Activated CD8-positive, alpha-beta T cell treated with anti-CD3 and anti-CD28 coated beads for 36 hours (primary cell): ENCODE measurements at regions of chr13 and their contacts with region 1.

Region 1: DNA sequence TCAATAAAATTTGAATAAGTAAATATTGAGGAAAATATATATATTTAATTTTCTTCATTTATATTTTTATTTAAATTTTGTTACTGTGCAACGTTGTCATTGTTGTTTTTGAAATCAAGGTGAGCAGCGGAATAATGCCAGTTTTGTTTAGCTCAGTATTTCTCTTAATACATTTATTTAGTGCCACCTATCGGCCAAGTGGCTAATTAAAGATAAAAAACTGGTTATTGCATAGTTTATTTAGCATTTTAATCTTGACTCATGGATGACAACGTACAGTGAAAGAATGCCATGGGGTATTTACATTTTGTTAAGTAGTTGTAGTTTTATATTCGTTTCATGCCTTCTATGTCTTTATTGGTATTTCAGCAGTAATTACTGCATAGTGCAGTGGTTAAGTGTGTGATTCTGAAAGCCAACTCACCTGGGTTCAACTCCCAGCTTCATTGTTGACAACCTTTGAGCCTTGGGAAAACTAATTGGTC is 265.9 kb downstream of the MYO16 start:
- DNase-seq: no peak
- ATAC-seq: no peak
- H3K4me3 Mint-ChIP-seq: no peak overlapping the region
- H3K27ac Mint-ChIP-seq: no peak overlapping the region
- H3K4me1 Mint-ChIP-seq: peaks cover 6% of the 10 kb centered on the region
- H3K27me3 Mint-ChIP-seq: peaks cover 3% of the 10 kb centered on the region
- CTCF ChIP-seq: peak; percentile 68

Region 2: DNA sequence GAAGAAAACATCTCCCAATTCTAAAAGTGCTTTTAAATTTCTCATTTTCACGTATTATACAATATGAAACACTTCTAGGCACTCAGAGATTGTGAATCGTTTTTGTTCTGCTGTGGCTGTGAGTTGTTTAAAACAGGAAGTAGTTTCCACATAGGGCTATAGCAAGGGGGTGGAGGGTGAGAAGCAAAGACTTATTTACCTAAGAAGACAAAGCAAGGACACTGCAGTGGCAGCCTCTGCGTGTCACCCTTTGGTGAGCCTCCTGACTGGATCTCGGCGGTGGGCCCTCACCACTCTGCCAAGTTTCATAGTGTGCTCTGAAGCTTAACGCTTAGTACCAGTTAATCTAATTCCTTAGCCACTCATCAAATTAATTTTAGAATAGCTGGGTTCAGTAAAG is 569.0 kb before region 1 on chr13:
- CTCF ChIA-PET with region 1: interaction called, 7 read pairs
- POLR2A ChIA-PET with region 1: no interaction called
- intact Hi-C with region 1: loop called (anchors 5 kb)
- DNase-seq: no peak
- ATAC-seq: peak; percentile 30
- H3K4me3 Mint-ChIP-seq: no peak overlapping the region
- H3K27ac Mint-ChIP-seq: no peak overlapping the region
- H3K4me1 Mint-ChIP-seq: peaks cover 2% of the 10 kb centered on the region
- H3K27me3 Mint-ChIP-seq: peaks cover 17% of the 10 kb centered on the region
- CTCF ChIP-seq: no peak

Region 3: GRCh38 chr13:108682714-108683113 is 212.5 kb before region 1 on chr13:
- CTCF ChIA-PET with region 1: no interaction called
- POLR2A ChIA-PET with region 1: no interaction called
- intact Hi-C with region 1: no loop called
- DNase-seq: no peak
- ATAC-seq: no peak
- H3K4me3 Mint-ChIP-seq: no peak overlapping the region
- H3K27ac Mint-ChIP-seq: no peak overlapping the region
- H3K4me1 Mint-ChIP-seq: no peaks in the 10 kb centered on the region
- H3K27me3 Mint-ChIP-seq: peaks cover 1% of the 10 kb centered on the region
- CTCF ChIP-seq: no peak

Region 4: DNA sequence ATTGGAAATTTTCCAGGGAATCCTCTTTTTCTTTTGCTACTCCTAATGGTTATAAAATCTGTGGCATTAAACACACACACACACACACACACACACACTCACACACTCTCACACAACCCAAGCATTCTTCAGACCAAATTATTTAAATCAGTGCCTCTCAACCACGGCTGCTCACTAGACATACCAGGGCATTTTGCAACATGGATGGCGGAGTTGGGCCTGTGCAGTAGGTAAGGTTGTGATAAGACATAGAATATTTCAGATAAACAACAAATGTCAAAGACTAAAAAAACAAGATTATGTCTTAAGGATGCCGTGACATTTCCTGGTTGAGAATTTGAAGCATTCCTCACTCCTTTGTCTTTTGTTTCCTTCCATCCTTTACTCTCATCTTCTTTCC is 177.2 kb after region 1 on chr13:
- CTCF ChIA-PET with region 1: no interaction called
- POLR2A ChIA-PET with region 1: no interaction called
- intact Hi-C with region 1: no loop called
- DNase-seq: no peak
- ATAC-seq: no peak
- H3K4me3 Mint-ChIP-seq: no peak overlapping the region
- H3K27ac Mint-ChIP-seq: no peak overlapping the region
- H3K4me1 Mint-ChIP-seq: no peaks in the 10 kb centered on the region
- H3K27me3 Mint-ChIP-seq: no peaks in the 10 kb centered on the region
- CTCF ChIP-seq: no peak